ENCODE measurements at regions of chr22 and their contacts with region 1.

Region 1: DNA sequence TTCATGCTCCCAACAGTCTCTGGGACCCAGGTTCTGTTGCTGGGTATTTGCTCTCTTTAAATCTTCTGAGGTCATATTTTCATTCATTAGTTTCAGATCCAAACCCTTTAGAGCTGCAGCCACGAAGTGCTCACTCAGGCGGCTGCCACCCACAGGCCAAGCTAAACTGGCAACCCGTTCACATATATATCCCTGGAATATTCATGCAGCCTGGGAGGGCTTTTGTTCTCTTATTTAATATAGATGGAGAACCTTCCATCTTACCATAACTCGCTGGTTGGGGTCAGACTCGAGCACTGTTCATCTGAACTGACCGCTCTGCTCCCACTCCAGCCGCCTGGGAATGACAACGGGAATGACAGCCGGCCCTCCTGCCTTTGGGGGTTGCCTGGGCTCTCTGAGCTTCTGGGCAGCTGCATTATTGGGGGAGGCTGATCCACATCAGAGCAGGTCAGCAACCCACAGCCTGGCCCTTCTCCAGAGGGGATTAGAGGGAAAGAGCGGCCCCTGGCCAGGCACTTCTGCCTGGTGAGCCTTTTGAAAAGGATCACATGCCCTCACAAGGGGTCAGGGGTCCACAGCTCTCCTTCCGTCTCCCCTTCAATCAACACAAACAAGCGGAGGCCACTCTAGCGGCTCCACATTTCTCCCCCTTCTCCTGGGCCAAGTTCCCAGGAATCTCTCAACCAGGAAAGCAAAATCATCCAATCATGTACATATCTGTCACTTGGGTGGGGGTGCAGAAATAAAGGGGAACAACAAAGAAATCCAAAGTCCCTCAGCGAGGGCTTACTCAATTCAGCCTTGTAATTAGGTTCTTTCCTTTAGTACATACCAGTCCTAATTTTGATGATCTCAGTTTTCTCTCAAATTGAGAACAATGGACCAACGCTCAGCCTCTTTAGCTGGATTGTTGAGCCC is 11.8 kb downstream of the TMEM184B start:
- DNase-seq: no peak
- ATAC-seq: peak in 1 of 2 donors; percentile 5

Region 2: GRCh38 chr22:38187413-38188212 is 73.4 kb before region 1 on chr22:
- intact Hi-C with region 1: loop called in 1 of 2 experiments (anchors 2 kb)
- DNase-seq: no peak
- ATAC-seq: no peak

Region 3: GRCh38 chr22:38305471-38306448 is 44.7 kb after region 1 on chr22:
- intact Hi-C with region 1: no loop called
- DNase-seq: no peak
- ATAC-seq: peak; percentile 22 to 36

Region 4: GRCh38 chr22:38338772-38339379 is 77.9 kb after region 1 on chr22:
- intact Hi-C with region 1: no loop called
- DNase-seq: no peak
- ATAC-seq: no peak

Measured in left cardiac atrium (tissue), 4 donors.